Ovary (tissue), 10 donors: ENCODE measurements at regions of chr11 and their contacts with region 1.

Region 1: DNA sequence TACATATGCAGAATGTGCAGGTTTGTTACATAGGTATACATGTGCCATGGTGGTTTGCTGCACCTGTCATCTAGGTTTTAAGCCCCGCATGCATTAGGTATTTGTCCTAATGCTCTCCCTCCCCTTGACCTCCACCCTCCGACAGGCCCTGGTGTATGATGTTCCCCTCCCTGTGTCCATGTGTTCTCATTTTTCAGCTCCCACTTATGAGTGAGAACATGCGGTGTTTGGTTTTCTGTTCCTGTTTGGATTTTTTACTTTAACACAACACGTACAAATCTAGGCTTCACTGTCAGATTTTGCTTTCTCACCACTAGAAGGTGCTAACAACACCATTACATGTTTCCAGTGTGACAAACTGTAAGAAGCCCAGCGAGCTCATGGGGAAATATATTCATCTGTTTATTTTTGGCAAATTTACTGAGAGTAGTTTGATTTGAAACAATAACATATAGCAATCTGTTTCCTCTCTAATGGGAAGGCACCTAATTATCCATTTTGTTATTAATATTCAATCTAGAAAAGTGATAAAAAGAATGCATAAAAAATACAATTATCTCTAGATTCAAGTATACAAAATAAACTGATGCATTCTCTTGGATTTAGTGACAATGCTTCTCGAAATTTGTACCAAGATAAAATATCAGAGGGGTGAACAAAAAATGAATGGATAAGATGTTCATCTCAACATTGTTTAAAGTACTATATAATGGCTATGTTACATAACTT is 23.2 kb upstream of the BIRC3 start:
- DNase-seq: no peak
- H3K4me3 ChIP-seq: no peak overlapping the region
- H3K27ac ChIP-seq: no peak overlapping the region
- H3K4me1 ChIP-seq: peaks cover 6% of the 10 kb centered on the region
- H3K27me3 ChIP-seq: no peaks in the 10 kb centered on the region
- CTCF ChIP-seq: peak; percentile 12 to 69 (median 58)
- EP300 ChIP-seq: no peak
- POLR2A ChIP-seq: no peak

Region 2: GRCh38 chr11:102488208-102488607 is 194.2 kb after region 1 on chr11:
- intact Hi-C with region 1: loop called in 1 of 4 experiments (anchors 10 kb)
- DNase-seq: no peak
- H3K4me3 ChIP-seq: no peak overlapping the region
- H3K27ac ChIP-seq: no peak overlapping the region
- H3K4me1 ChIP-seq: no peaks in the 10 kb centered on the region
- H3K27me3 ChIP-seq: no peaks in the 10 kb centered on the region
- CTCF ChIP-seq: no peak
- EP300 ChIP-seq: no peak
- POLR2A ChIP-seq: no peak